ENCODE measurements at regions of chr2 and their contacts with region 1.

Region 1: DNA sequence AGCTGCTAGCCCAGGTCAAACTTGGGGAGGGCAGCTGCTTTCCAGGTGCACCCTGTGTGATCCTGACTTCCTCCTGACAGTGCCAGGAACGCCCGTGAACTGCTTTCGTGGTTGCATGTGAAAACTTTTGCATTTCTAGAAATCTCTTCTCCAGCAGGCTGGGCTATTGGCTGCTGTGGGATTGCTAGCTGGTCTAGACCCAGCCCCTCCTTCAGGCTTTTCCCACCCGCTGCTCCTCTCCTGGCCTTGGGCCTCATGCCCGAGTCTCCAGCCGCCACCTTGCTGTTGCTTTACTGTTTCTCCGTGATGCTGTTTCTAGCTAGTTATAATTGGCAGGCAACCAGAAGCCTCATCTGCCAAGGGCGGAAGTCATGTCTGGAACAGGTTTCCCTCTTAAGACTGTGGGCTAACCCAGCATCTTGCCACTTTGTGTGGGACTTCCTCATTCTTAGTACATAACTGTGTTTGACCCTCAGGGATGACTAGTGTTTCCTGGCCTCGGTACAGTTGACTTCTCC is 27.0 kb upstream of the MGAT4A start:
- DNase-seq: peak; percentile 98
- H3K4me3 ChIP-seq: no peak overlapping the region
- H3K27ac ChIP-seq: peak overlapping the region; percentile 66
- H3K4me1 ChIP-seq: peaks cover 20% of the 10 kb centered on the region
- H3K27me3 ChIP-seq: no peaks in the 10 kb centered on the region
- CTCF ChIP-seq: peak in 1 of 2 donors; percentile 3
- POLR2A ChIP-seq: peak; percentile 62

Region 2: DNA sequence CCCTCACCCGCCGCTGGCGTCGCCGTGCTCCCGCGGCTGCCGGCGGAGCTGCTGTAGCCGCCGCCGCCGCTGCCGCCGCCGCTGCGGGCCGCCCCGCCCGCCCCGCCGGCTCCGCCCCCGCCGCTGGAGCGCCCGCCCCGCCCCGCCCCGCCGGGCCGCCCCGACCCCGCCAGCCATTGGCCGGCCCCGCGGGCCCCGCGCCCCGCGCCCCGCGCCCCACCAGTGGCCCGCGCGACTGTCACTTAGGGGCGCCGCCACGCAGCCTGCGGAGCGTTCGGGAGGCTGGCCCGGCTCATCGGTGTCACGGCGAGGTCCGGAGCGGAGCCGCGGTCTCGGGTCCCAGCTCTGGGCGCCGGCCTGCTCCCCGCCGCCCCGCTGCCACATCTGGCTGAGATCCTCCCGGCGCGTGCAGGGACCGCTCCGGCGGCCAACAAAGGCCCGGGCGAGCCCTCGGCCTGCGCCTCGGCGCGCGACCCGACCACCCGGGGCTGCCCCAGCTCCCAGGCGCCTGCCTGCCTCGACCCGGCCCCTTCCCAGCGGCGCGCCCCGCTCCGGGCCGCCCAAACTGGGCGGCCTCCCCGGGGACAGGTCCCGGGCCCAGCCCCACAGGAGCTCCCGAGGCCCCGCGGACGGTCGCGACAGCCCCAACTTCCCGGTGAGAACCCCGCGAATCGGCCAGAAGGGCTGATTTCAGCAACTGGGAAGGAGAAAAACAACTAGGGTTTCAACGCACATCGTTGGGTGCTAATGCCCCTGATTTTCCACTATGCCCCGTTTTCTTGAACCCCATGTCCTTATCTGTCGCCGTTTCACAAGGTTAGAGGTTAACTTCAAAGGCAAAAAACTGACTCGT is 26.7 kb before region 1 on chr2 and contains the start of gene MGAT4A:
- CTCF ChIA-PET with region 1: interaction called, 17 read pairs
- POLR2A ChIA-PET with region 1: no interaction called
- dilution Hi-C with region 1: no loop called
- intact Hi-C with region 1: loop called (anchors 1 kb)
- DNase-seq: peak; percentile 52
- H3K4me3 ChIP-seq: peak within 1 kb of the TSS; percentile 64 to 97 (median 77)
- H3K27ac ChIP-seq: peak within 1 kb of the TSS; percentile 60
- H3K4me1 ChIP-seq: peaks cover 48% of the 10 kb centered on the region
- H3K27me3 ChIP-seq: no peaks in the 10 kb centered on the region
- CTCF ChIP-seq: no peak
- POLR2A ChIP-seq: peak; percentile 68
- total RNA-seq, gene MGAT4A: 42.2 and 47.6 TPM in 2 replicates

Region 3: DNA sequence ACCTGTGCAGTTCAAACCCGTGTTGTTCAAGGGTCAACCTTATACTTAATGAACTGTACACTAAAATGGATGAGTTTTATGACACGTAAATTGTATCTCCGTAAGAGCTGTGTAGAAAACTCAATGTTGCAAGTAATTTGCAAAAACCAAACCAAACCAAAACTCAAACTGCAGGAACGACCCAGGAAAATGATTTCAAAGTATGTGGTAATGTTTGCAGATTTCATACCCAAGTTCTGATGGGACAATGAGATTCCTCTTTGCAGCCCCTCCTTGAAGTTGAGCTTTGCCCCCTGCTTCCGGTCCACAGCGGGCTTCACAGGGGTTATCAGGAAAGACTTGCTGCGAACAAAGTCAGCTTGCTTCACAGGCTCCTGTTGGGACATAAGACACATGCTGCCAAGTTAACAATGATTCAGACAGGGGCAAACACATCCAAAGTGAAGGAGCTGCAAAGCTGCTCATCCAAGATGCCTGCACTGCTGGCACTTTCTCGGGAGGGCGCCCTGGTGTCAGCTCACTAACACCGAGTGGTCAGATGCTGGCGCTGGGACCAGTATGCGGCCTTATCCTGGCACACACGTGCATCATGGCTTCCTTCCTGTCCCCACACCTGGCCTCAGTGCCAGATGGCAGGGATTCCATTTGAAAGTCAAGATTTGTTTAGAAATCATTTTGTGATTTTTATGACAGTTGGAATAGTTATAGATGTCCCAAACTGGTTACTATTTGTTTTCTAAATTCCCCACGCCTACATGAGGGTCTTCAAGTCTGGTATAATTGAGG is 38.1 kb after region 1 on chr2:
- CTCF ChIA-PET with region 1: interaction called, 4 read pairs
- POLR2A ChIA-PET with region 1: no interaction called
- dilution Hi-C with region 1: no loop called
- intact Hi-C with region 1: loop called (anchors 1 kb)
- DNase-seq: peak; percentile 49
- H3K4me3 ChIP-seq: no peak overlapping the region
- H3K27ac ChIP-seq: no peak overlapping the region
- H3K4me1 ChIP-seq: peaks cover 43% of the 10 kb centered on the region
- H3K27me3 ChIP-seq: no peaks in the 10 kb centered on the region
- CTCF ChIP-seq: peak in 1 of 2 donors; percentile 6
- POLR2A ChIP-seq: no peak

Region 4: DNA sequence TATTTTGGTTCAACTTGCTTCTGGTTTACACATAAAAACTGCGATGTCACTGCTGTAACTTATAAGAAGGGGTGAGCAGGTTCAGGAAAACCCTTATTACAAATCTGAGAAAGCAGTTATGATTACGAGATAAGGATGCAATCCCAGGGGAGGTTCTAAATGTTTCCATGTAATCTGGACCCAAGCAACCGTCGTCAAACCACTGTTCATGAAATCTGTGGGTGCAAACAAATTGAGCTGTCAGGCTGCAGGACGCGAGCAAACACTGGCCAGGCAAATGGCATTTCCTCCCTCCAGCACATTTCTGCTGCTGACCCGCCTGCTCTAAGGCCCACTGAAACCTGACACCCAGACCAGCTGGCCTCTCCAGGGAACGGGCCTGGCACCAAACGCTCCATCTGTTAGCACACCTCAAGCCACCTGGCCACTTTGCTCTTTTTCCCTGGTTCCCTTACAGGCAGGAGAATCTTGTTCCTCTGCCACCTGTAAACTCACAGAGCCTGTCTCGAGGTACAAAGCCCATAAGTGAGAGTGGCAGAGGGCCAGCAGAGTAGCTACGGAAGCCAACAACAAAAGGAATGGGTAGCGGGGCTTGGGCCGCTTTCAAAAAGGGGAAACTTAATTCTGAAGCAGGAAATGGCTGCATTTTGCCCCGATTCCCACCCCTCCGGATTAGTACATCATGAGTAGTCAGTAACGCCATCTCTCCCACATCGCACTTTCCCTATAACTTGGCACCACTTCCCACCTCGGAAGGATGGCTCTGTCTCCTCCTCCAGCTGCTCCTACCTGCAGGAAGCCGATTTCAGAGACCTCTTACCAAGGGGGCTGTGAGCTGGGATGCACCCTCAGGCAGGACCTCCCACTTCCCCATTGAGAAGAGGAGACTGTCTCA is 151.6 kb after region 1 on chr2:
- CTCF ChIA-PET with region 1: no interaction called
- POLR2A ChIA-PET with region 1: no interaction called
- dilution Hi-C with region 1: no loop called
- intact Hi-C with region 1: loop called (anchors 2 kb)
- DNase-seq: peak; percentile 91
- H3K4me3 ChIP-seq: peak overlapping the region in 1 of 3 experiments; percentile 25
- H3K27ac ChIP-seq: peak overlapping the region; percentile 84
- H3K4me1 ChIP-seq: peaks cover 38% of the 10 kb centered on the region
- H3K27me3 ChIP-seq: no peaks in the 10 kb centered on the region
- CTCF ChIP-seq: no peak
- POLR2A ChIP-seq: no peak